ENCODE measurements at regions of chr10 and their contacts with region 1.

Region 1: DNA sequence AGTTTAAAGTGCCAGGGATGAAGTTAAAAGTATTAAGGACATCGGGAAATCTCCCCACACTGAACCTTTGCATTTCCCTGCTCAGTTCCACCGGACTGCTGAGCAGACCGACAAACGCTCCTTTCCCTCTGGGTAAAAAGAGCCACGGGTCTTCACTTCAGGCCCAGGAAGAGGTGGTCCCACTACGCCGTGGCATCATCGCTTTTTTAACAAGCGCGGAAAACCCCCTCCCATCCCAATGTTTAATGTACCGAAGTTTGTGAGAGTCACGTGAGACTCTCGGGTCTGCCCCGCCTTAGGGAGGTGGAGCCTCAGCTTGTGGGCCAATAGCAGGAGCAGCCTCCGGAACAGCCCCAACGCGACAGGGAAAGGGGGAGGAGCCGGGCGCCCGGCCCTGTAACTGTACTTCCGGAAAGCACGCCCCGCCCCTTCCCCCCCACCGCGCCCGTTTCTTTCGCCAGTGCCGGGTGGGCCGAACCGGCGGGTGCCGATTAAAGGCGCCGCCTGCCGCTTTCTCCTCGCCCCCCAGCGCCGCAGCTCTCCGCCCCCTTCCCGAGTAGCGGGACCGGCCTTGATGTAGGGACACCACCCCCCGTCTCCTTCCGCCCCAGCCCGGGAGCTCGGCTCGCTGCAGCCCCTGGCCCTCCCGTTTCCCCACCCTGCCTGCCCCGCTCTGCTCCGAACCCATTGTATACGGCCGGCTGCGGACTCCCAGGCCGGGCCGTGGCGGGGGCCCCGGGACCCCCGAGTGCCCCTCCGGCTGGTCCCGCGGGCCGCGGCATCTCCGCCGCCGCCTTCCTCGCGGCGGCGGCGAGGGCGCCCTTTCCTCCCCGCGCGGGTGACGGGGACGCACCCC is 2.2 kb upstream of the TRIM8 start:
- DNase-seq: peak; percentile 94
- ATAC-seq: peak; percentile 62
- H3K4me3 Mint-ChIP-seq: peak overlapping the region; percentile 86
- H3K27ac Mint-ChIP-seq: peak overlapping the region; percentile 67
- H3K4me1 Mint-ChIP-seq: peaks cover 17% of the 10 kb centered on the region
- H3K27me3 Mint-ChIP-seq: peaks cover 2% of the 10 kb centered on the region

Region 2: DNA sequence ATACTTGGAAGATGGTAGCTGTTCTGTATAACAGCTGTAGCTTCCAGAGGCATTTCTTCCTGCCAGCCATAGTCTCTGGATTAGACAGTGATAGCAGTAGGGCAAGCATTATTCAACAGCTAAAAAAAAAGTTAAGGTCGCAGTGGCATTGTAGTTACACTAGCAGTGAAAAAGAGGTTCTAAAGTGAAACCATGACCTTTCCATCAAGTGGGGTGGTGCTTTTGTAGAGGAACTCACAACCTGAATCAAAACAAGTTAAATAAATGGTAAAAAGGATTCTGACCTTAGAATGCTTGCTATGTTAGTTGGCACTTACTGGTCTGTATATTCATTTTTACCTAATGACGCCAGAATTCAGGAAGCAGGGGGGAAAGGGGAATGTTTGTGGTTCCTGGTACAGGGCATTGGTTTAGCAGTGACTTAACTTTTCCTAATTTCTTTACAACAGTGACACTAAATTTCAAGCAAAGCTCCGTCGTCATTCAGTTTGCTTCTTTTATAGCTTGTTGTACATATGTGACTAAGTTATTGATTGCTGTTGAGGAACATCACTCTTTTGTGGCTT is 341.7 kb before region 1 on chr10:
- POLR2A ChIA-PET with region 1: no interaction called
- DNase-seq: no peak
- ATAC-seq: no peak
- H3K4me3 Mint-ChIP-seq: no peak overlapping the region
- H3K27ac Mint-ChIP-seq: peak overlapping the region; percentile 34
- H3K4me1 Mint-ChIP-seq: peaks cover 22% of the 10 kb centered on the region
- H3K27me3 Mint-ChIP-seq: no peaks in the 10 kb centered on the region

Region 3: DNA sequence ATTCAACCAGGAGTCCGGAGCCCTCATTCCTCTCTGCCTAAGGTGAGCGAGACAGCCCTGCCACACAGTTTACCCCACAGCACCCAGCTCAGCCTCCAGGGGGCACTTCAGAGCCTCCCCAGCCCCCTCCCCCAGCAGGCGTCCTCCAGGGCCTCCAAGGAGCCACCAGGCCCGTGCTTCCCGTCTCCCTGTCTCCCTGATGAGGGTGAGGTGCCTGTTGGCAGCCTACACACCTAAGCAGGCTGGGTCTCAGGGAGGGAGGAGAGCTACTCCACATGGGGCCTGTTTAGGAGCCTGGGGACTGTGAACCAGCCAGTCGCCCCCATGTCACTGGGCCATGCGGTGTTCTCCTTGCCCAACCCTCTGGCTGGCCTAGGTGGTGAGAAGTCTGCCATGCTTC is 26.7 kb before region 1 on chr10:
- POLR2A ChIA-PET with region 1: interaction called, 11 read pairs
- DNase-seq: no peak
- ATAC-seq: no peak
- H3K4me3 Mint-ChIP-seq: no peak overlapping the region
- H3K27ac Mint-ChIP-seq: peak overlapping the region; percentile 61
- H3K4me1 Mint-ChIP-seq: peaks cover 31% of the 10 kb centered on the region
- H3K27me3 Mint-ChIP-seq: no peaks in the 10 kb centered on the region

Region 4: DNA sequence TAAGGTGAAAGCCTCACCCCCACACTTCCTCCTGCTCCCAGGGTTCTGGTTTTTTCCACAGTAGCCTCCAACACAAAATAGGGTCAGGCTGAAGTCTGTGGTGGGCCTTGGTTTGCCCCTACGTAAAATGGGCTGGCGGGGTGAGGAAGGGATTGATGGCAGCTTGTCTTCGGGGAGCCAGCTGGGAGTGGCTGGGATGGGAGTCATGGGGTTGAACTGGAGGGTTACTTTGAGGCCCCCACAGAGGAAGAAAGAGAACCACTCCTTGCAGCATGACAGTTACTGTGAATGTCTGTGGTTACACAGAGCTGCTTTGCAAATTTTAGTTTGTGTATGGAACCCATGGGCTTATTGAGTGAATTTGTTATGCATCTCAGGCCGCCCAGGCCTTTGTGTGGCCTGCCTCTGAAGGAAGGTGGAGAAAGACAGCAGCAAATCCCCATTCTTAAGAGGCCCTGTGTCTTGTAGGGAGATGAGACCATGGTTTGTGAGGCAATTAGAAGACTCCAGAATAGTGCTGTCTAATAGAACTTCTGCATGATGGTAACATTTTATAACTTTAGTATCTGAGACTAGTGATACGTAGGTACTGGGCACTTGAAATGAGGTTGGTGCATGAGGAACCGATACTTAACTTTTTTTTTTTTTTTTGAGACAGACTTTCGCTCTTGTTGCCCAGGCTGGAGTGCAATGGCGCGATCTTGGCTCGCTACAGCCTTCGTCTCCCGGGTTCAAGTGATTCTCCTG is 10.2 kb after region 1 on chr10:
- POLR2A ChIA-PET with region 1: interaction called, 73 read pairs
- DNase-seq: no peak
- ATAC-seq: peak; percentile 44
- H3K4me3 Mint-ChIP-seq: peak overlapping the region; percentile 85
- H3K27ac Mint-ChIP-seq: peak overlapping the region; percentile 99
- H3K4me1 Mint-ChIP-seq: peaks cover 60% of the 10 kb centered on the region
- H3K27me3 Mint-ChIP-seq: no peaks in the 10 kb centered on the region

Region 5: GRCh38 chr10:102660888-102661657 is 19.0 kb after region 1 on chr10:
- POLR2A ChIA-PET with region 1: interaction called, 73 read pairs
- DNase-seq: peak; percentile 83
- ATAC-seq: peak; percentile 84
- H3K4me3 Mint-ChIP-seq: peak overlapping the region; percentile 69
- H3K27ac Mint-ChIP-seq: peak overlapping the region; percentile 91
- H3K4me1 Mint-ChIP-seq: peaks cover 36% of the 10 kb centered on the region
- H3K27me3 Mint-ChIP-seq: no peaks in the 10 kb centered on the region

Region 6: DNA sequence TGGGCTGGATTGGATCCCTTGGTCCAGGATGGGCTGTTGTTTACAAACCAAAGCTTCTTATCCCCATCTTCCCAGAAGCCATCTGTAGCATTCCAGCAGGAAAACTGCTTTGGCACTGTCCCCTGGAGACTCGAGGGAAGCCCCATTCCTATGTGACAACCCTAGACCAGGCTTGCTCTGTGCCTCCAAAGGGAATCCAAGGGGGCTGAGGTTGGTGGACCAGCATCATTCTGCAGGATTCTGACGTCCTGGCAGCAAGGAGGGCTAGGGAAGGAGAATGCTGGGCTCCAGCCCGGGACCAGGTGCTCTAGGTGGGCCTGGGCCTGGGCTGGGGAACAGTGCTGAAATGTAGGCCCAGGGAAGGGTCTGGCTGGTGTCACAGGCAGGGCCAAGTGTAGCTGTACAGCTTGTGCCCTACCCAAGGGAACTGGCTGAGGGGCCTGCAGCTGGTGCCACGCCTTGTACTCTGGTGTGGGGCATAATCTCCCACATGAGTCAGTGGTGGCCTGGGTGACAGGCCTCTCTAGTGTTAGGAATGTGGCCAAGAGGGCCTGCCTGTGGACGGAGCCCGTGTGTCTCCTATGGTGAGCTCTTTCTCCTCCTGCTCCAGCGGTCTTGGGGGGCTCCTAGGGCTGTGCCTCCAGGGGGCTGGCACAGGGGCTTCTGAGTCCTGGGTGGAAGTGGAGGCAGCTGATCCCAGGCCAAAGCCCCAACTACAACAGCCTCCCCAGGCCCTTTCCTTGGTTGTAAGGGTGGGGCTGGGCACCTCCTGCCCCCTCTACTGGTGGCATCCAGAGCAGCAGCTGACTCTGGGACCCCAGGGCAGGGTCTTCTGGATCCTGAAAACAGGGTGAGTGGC is 27.3 kb after region 1 on chr10:
- POLR2A ChIA-PET with region 1: interaction called, 67 read pairs
- DNase-seq: no peak
- ATAC-seq: no peak
- H3K4me3 Mint-ChIP-seq: no peak overlapping the region
- H3K27ac Mint-ChIP-seq: no peak overlapping the region
- H3K4me1 Mint-ChIP-seq: peaks cover 23% of the 10 kb centered on the region
- H3K27me3 Mint-ChIP-seq: no peaks in the 10 kb centered on the region

Region 7: DNA sequence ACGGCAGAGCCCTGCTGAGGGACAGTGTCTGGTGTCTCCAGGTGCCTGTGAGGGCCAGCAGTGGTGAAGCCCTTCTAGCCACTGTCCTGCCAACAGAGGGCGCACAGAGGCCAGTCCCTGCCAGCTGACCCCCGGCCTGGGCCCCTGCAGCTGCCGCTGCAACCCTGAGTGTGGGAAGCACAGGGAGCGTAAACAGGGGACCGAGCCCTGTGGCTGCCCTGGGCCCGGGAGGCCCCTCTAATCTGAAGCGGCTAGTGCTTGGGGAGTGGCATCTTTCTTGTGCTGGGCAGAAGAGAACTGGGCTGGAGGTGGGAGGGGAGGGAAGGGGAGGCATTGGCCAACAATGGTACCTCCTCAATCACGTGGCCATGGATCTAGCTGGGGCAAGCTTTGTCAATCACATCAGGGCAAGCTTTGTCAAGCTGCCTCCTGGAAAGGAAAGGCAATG is 36.8 kb after region 1 on chr10:
- POLR2A ChIA-PET with region 1: interaction called, 67 read pairs
- DNase-seq: no peak
- ATAC-seq: no peak
- H3K4me3 Mint-ChIP-seq: no peak overlapping the region
- H3K27ac Mint-ChIP-seq: no peak overlapping the region
- H3K4me1 Mint-ChIP-seq: peaks cover 42% of the 10 kb centered on the region
- H3K27me3 Mint-ChIP-seq: no peaks in the 10 kb centered on the region

Region 8: GRCh38 chr10:102696736-102697135 is 54.6 kb after region 1 on chr10:
- POLR2A ChIA-PET with region 1: no interaction called
- DNase-seq: no peak
- ATAC-seq: no peak
- H3K4me3 Mint-ChIP-seq: no peak overlapping the region
- H3K27ac Mint-ChIP-seq: no peak overlapping the region
- H3K4me1 Mint-ChIP-seq: peaks cover 4% of the 10 kb centered on the region
- H3K27me3 Mint-ChIP-seq: no peaks in the 10 kb centered on the region

Region 9: GRCh38 chr10:102713814-102714620 is 71.9 kb after region 1 on chr10 and contains the start of gene ARL3:
- POLR2A ChIA-PET with region 1: interaction called, 33 read pairs
- DNase-seq: peak; percentile 93
- ATAC-seq: peak; percentile 94
- H3K4me3 Mint-ChIP-seq: peak within 1 kb of the TSS; percentile 94
- H3K27ac Mint-ChIP-seq: peak within 1 kb of the TSS; percentile 89
- H3K4me1 Mint-ChIP-seq: peaks cover 44% of the 10 kb centered on the region
- H3K27me3 Mint-ChIP-seq: no peaks in the 10 kb centered on the region
- total RNA-seq, gene ARL3: 4.6 TPM